Activated B cell treated with CpG ODN at 0.5 μM for 24 hours (primary cell): ENCODE measurements at regions of chr9 and their contacts with region 1.

Region 1: DNA sequence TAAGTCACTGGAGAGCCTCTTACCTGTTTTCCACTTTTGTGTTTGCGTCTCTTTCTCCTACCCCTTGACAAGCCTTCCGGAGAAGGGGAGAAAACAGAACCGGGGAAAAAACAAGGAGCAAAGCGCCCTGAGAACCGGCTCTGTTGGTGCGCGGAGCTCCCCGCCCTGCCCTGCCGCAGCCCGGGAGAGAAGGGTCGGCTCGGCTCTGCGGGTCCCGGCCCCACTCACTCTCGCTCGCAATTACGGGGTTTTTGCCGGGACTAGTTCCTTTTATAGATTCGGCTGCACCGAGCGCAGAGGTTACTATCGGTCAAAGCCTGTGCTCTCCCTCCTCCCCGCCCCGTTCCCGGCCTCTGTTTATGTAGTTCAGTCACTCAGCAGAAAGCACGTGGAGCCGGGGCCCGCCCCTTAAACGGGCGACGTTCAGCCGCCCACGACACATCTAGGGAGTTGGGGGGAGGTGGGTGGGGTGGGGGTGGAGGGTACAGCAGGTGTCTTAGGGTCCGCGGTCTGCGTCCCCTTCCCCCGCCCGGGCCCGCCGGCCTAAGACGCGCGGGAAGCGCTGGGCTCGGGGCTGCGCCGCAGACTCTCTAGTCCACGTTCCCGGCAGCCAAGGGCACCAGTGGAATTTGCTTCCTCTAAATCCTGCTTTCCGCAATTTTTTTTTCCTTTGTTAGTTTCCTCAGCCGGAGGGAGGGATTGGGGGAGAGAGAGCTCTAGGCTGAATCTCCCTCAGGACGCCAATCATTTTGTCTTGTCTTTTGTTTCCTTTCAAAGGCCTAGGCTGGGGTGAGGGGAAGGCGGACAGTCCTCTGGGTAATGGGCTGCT is at the start of gene ABCA1:
- DNase-seq: peak; percentile 64
- ATAC-seq: peak; percentile 73
- H3K4me3 Mint-ChIP-seq: peak within 1 kb of the TSS; percentile 93
- H3K27ac Mint-ChIP-seq: peak within 1 kb of the TSS; percentile 68
- H3K4me1 Mint-ChIP-seq: peaks cover 42% of the 10 kb centered on the region
- H3K27me3 Mint-ChIP-seq: no peaks in the 10 kb centered on the region
- CTCF ChIP-seq: no peak
- total RNA-seq, gene ABCA1: 1.7 and 2.3 TPM in 2 replicates

Region 2: DNA sequence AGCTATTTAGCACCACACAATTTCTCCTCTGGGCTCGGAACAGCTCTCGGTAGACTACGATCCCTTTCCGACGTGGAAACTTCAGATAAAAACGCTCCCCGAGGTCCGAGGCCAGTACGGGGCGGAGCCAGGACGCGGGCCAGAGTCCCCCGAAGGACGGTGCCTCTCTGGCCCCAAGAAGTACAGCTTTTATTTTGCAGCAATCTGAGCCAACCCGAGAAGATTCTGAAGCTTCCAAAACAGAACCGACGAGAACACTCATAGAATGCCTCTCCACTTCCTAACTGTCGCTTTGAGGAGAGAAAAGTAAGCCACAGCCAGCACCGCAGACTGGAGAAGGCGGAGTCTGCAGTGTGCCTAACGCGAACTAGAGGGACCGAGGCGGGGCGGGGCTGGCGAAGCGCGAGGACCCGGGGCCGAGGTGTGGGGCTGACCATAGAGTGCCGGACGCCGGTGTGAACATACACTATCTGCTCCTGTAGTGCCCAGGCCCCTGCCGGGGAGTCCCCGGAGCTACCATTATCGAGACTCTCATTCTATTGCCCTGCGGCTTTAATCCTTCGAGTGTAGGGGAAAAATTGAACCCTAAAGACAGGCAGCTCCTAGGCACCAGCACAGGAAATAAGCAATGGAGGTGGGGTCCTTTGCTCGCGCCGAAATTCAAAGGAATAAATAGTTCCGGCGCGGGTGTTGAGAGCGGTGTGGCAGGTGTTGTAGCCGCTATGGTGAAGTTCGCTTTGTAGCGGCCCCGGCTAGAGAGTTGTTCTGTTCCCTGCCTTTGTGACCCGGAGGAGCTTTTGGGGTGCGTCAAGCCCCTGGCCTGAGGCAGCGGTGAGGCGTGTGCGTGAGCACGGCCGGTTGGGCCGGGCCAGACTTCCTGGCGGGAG is 834.2 kb before region 1 on chr9 and contains the start of gene SMC2:
- CTCF ChIA-PET with region 1: no interaction called
- POLR2A ChIA-PET with region 1: no interaction called
- intact Hi-C with region 1: loop called (anchors 5 kb)
- DNase-seq: peak; percentile 90
- ATAC-seq: peak; percentile 97
- H3K4me3 Mint-ChIP-seq: peak within 1 kb of the TSS; percentile 99
- H3K27ac Mint-ChIP-seq: peak within 1 kb of the TSS; percentile 99
- H3K4me1 Mint-ChIP-seq: peaks cover 31% of the 10 kb centered on the region
- H3K27me3 Mint-ChIP-seq: no peaks in the 10 kb centered on the region
- CTCF ChIP-seq: no peak
- total RNA-seq, gene SMC2: 12.5 and 13.5 TPM in 2 replicates

Region 3: DNA sequence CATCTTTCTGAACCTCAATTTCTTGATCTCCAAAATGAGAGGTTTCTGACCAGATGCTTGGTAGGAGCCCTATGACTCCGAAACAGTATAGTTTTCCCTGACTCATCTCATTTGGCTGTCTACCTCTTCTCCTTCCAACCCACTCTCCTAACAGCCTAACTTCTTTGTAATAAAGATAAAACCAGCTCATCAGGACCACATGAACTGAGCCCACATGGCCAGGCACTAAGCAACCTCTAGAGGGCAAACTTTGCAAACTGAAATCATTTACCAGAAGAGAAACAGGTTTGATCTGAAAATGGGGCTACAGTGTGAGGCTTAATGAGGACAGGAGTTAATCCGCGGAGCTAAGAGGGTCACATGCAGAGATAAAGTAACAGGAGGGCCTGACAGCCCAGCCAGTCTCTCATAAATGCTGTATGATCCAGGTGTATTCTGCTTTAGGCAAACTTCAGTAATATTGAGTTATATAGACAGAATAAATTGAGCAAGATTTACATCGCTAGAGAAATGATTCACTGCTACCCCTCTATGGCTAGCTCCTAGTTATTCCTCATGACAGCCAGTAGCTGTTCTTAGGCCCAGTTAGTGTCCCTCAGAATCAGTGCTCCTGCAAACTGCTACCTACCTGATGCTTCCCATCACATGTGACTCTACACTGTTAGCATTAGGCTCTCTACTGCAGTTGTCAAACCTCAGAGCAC is 64.8 kb before region 1 on chr9:
- CTCF ChIA-PET with region 1: interaction called, 8 read pairs
- POLR2A ChIA-PET with region 1: interaction called, 12 read pairs
- intact Hi-C with region 1: loop called (anchors 1 kb)
- DNase-seq: no peak
- ATAC-seq: peak; percentile 74
- H3K4me3 Mint-ChIP-seq: no peak overlapping the region
- H3K27ac Mint-ChIP-seq: no peak overlapping the region
- H3K4me1 Mint-ChIP-seq: peaks cover 53% of the 10 kb centered on the region
- H3K27me3 Mint-ChIP-seq: no peaks in the 10 kb centered on the region
- CTCF ChIP-seq: no peak

Region 4: DNA sequence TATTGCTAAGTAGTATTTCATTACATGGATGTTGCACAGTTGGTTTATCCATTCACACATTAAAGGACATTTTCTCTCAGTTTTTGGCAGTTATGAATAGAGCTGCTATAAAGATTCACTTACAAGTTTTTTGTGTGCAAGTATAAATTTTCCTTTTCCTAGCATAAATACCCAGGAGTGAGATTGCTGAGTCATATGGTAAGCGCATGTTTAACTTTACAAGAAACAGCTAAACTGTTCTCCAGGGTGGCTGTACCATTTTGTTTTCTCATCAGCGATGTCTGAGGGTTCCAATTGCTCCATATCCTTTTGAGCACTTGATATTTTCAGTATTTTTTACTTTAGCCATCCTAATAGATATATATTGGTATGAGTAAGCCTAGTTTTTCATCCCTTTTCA is 16.2 kb after region 1 on chr9:
- CTCF ChIA-PET with region 1: no interaction called
- POLR2A ChIA-PET with region 1: no interaction called
- intact Hi-C with region 1: no loop called
- DNase-seq: no peak
- ATAC-seq: no peak
- H3K4me3 Mint-ChIP-seq: no peak overlapping the region
- H3K27ac Mint-ChIP-seq: no peak overlapping the region
- H3K4me1 Mint-ChIP-seq: no peaks in the 10 kb centered on the region
- H3K27me3 Mint-ChIP-seq: no peaks in the 10 kb centered on the region
- CTCF ChIP-seq: no peak

Region 5: GRCh38 chr9:104968025-104968982 is 40.2 kb after region 1 on chr9:
- CTCF ChIA-PET with region 1: interaction called, 3 read pairs
- POLR2A ChIA-PET with region 1: interaction called, 15 read pairs
- intact Hi-C with region 1: loop called (anchors 1 kb)
- DNase-seq: peak; percentile 91
- ATAC-seq: peak; percentile 99
- H3K4me3 Mint-ChIP-seq: peak overlapping the region; percentile 94
- H3K27ac Mint-ChIP-seq: peak overlapping the region; percentile 20
- H3K4me1 Mint-ChIP-seq: peaks cover 10% of the 10 kb centered on the region
- H3K27me3 Mint-ChIP-seq: peaks cover 15% of the 10 kb centered on the region
- CTCF ChIP-seq: no peak

Region 6: GRCh38 chr9:105157130-105157583 is 229.0 kb after region 1 on chr9:
- CTCF ChIA-PET with region 1: no interaction called
- POLR2A ChIA-PET with region 1: no interaction called
- intact Hi-C with region 1: loop called (anchors 1 kb)
- DNase-seq: no peak
- ATAC-seq: peak; percentile 50
- H3K4me3 Mint-ChIP-seq: no peak overlapping the region
- H3K27ac Mint-ChIP-seq: no peak overlapping the region
- H3K4me1 Mint-ChIP-seq: no peaks in the 10 kb centered on the region
- H3K27me3 Mint-ChIP-seq: no peaks in the 10 kb centered on the region
- CTCF ChIP-seq: no peak

Region 7: DNA sequence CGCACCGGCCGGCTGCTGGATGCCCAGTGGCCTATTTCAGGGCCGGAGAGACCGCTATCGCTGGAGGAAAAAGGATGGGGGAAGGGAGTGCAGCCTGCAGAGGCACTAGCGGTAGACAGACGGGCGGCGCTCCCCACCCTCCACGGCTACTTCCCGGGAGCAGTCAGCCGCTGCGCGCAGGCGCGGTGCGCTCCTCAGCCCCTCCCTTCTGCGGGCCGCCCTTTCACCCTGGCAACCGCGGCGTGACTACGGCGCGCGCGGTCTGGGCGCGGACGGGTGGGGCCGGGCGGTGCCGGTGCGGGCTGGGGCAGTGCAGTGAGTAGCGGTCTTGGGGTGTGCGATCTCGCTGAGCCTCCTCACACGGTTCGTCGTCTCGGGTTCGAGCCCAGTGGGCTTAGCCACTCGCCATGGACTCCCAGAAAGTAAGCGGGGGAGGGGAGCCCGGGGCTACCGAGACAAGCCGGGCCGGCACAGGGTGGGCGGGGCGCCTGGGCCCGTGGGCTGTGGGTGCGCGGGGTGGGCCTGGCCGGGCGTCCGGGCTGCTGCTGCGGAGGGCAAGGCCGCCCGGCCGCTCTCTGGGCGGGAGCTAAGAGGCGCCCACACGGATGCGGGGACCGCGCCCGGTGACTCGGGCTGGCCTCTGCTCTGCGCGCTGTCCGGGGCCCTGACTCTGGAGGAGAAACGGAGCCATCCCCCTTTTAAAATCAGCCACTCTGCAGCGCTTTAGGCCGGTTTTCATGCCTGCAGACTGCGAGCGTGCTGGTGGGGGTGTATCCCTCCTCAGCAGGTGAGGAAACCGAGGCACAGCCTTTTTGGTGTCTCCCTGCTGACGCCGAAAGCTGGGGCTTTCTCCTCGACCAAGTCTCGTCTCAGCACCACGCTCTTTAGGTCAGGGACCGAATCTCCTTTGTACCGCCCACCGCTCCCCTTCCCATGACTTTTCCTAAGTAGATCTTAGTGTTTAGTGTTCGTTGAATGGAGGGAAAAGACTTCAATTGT is 520.0 kb after region 1 on chr9 and contains the start of gene FSD1L:
- CTCF ChIA-PET with region 1: no interaction called
- POLR2A ChIA-PET with region 1: no interaction called
- intact Hi-C with region 1: loop called (anchors 1 kb)
- DNase-seq: peak; percentile 89
- ATAC-seq: peak; percentile 92
- H3K4me3 Mint-ChIP-seq: peak within 1 kb of the TSS; percentile 90
- H3K27ac Mint-ChIP-seq: peak within 1 kb of the TSS; percentile 75
- H3K4me1 Mint-ChIP-seq: peaks cover 17% of the 10 kb centered on the region
- H3K27me3 Mint-ChIP-seq: no peaks in the 10 kb centered on the region
- CTCF ChIP-seq: no peak
- total RNA-seq, gene FSD1L: 10.2 and 12.4 TPM in 2 replicates

Region 8: DNA sequence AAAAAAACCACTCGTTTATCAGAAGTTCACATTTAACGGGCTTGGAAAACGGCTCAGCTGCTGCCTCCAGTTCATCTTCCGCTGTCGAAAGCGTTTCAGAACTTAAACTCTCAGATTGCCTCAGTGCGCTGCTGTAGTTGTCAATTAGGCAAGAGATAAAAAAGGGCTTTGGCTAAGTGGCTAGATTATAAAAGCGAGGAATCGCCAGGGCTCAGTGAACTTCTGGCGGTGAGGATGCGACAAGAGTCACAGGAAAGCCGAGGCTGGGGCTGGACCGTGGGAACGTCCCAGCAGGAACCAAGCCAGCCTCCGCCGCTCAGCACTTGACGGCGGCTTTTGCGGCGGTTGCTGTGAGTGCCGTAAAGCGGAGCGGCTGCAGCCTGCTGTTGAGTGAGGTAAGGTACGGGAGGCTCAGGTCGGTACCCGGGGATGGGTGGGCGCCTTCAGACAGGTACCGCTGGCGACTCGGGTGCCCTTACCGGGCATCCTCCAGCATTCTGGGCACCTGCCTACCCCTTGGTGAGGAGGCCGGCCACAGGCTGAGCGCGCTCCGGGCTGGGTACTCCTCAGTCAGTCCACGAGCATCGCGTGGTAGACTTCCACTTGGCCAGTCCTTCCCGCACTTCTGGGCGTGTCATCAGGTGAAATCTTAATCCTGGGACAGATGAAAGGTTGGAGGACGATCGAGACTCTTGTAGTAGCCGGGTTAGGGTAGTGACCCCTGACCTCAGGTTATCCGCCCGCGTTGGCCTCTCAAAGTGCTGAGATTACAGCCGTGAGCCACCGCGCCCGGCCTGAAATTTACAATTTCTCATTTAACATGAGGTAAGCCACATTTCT is 629.9 kb after region 1 on chr9 and contains the start of gene FKTN:
- CTCF ChIA-PET with region 1: no interaction called
- POLR2A ChIA-PET with region 1: no interaction called
- intact Hi-C with region 1: loop called (anchors 2 kb)
- DNase-seq: peak; percentile 72
- ATAC-seq: peak; percentile 99
- H3K4me3 Mint-ChIP-seq: peak within 1 kb of the TSS; percentile 96
- H3K27ac Mint-ChIP-seq: peak within 1 kb of the TSS; percentile 83
- H3K4me1 Mint-ChIP-seq: peaks cover 20% of the 10 kb centered on the region
- H3K27me3 Mint-ChIP-seq: no peaks in the 10 kb centered on the region
- CTCF ChIP-seq: no peak
- total RNA-seq, gene FKTN: 16.8 and 17.5 TPM in 2 replicates